ENCODE measurements at regions of chr13 and their contacts with region 1.

Region 1: DNA sequence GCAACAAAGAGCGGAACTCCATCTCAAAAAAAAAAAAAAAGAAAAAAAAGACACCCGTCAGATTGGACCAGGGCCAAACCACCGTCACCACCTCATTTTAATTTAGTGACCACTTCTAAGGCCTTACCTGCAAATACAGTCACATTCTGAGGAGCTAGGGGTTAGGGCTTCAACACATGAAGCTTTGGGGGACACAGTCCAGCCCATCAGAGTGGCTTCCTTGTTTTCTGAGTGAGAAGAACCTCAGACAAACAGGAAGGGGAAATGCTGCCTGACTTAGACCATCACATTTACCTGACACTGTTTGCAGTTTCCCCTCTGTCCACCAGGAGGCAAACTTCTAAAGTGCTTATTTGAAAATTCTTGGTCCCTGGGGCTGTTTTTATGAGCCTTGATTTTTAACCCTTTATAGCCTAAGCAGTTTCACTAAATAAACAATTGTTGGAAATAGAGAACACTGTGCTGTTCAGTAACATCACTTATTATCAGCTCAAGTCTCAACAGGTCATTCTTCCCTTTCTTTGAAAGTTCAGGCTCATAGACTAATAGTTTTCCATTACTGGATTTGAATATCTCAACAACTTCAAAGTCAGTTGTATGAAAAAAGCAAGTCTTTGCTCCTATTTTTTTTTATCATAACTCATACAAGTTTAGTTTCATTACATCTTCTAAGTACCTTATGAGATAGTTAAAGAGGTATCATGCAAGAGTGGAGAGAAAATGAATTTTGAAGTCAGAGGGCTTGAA is 74.9 kb upstream of the WASF3 start:
- ATAC-seq: peak in 4 of 8 experiments; percentile 27 to 67 (median 52)
- H3K4me3 ChIP-seq: no peak overlapping the region
- H3K27ac ChIP-seq: no peak overlapping the region
- H3K4me1 ChIP-seq: peaks cover 0 to 2% of the 10 kb centered on the region in 2 donors

Region 2: DNA sequence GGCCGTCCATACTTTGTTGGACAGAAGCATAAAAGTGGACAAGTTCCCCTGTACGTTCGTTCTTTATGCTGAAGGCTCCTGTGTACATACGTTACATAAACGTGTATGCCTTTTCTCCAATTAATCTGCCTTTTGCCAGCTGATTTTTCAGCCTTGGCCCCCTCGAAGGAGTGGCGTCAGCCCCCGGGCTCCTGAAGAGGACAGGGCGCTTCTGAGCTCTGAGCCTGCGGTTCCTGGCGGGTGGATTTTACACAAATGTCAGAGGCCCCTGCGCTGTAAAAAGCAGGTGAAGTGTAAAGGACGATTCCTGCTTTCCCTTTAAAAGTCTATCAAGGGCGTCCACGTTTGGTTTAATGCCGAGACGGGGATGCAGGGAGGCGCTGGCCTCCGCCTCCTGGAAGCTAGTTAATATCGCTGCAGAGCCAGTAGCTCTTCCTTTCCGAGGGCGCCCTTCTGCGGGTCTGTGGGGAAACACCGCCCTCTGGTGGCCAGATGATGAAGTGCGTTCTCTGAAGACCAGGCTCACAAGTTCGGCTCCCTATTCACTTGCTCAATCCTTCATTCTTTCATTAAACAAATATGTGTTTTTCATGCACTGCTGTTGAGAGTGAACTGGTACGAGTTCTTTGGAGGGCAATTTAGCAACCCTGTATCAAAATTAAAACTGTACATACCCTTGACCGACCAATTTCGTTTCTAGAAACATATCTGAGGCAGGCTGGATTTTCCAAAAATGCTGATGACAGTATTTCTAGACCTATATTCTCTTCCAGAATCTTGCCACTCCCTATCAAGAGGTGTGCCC is 216.0 kb after region 1 on chr13:
- in situ Hi-C with region 1: loop called in 4 of 9 experiments (anchors 10 to 25 kb)
- ATAC-seq: peak; percentile 88 to 95 (median 94)
- H3K4me3 ChIP-seq: no peak overlapping the region
- H3K27ac ChIP-seq: no peak overlapping the region
- H3K4me1 ChIP-seq: no peaks in the 10 kb centered on the region

Region 3: GRCh38 chr13:26847281-26847680 is 364.7 kb after region 1 on chr13:
- in situ Hi-C with region 1: no loop called
- ATAC-seq: peak in 2 of 8 experiments; percentile 35 to 44
- H3K4me3 ChIP-seq: no peak overlapping the region
- H3K27ac ChIP-seq: no peak overlapping the region
- H3K4me1 ChIP-seq: peaks cover 6 to 7% of the 10 kb centered on the region in 2 donors

Measured in motor neuron (in vitro differentiated cells).